ENCODE measurements at regions of chr10 and their contacts with region 1.

Region 1: GRCh38 chr10:83574770-83575169 is 564.5 kb upstream of the GHITM start:
- DNase-seq: no peak
- ATAC-seq: no peak

Region 2: DNA sequence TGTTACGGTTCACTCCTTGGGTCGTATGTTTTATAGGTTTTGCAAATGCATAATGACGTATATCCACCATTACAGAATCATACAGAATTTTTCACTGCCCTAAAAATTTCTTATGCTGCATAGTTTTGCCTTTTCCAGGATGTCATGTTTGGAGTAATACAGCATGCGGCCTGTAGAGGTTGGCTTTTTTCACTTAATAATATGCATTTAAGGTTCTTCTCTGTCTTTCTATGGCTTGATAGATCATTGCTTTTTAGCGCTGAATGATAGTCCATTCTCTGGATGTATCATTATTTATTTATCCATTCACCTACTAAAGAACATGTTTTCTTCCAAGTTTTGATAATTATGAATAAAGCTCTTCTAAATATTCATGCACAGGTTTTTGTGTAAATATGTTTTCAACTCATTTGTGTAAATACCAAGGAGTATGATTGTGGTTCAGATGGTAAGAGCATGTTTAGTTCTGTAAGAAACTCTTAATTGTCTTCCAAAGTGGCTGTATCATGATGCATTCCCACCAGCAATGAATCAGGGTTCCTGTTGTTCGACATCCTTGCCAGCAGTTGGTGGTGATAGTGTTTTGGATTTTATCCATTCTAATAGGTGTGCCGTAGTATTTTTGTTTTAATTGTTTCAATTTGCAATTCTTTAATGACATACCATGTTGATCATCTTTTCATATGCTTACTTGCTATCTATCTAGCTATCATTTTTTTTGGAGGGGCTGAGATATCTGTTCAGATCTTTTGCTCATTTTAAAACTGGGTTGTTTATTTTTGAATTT is 33.4 kb after region 1 on chr10:
- intact Hi-C with region 1: loop called (anchors 2 kb)
- DNase-seq: no peak
- ATAC-seq: no peak